CD8-positive, alpha-beta T cell (primary cell): ENCODE measurements at regions of chr5 and their contacts with region 1.

Region 1: DNA sequence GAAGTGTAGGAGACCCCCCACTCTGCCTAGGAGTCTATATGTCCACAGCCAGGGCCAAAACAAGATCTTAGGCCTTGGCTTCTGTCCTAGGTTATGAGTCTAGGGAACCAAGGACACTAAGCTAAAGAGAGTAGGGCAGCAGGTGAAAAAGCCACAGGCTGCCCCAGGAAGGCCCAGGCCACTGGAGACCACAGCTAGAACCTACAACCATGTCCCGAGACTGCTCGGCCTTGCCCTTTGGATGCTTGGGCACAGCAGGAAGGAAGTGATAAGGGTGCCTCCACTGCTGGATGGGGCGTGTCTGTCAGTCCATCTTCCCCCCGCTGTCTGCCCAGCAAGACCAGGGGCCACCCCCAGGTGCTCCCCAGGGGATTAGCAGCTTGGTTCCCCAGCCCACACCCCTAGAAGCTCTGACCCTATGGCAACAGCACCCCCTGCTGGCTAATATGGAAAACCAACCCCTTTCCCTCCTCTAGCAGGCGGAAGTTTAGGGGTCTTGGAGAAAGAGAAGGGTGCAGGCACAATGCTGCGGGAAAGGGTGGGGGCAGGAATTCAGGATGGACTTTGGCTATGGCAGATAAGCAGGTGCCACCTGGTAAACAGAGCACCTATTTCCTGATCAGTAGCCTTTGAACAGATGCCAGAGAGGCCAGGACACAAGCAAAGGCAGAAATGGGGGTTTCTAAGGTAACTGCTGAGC is 10.5 kb upstream of the IRF1 start:
- DNase-seq: peak; percentile 49 to 89 (median 79)
- ATAC-seq: peak; percentile 26
- H3K4me3 ChIP-seq: no peak overlapping the region
- H3K4me3 Mint-ChIP-seq: no peak overlapping the region
- H3K27ac ChIP-seq: peak overlapping the region in 1 of 2 experiments; percentile 86
- H3K27ac Mint-ChIP-seq: no peak overlapping the region
- H3K4me1 ChIP-seq: peaks cover 32% of the 10 kb centered on the region
- H3K4me1 Mint-ChIP-seq: peaks cover 36% of the 10 kb centered on the region
- H3K27me3 ChIP-seq: no peaks in the 10 kb centered on the region
- H3K27me3 Mint-ChIP-seq: peaks cover 3% of the 10 kb centered on the region
- CTCF ChIP-seq: peak; percentile 76

Region 2: DNA sequence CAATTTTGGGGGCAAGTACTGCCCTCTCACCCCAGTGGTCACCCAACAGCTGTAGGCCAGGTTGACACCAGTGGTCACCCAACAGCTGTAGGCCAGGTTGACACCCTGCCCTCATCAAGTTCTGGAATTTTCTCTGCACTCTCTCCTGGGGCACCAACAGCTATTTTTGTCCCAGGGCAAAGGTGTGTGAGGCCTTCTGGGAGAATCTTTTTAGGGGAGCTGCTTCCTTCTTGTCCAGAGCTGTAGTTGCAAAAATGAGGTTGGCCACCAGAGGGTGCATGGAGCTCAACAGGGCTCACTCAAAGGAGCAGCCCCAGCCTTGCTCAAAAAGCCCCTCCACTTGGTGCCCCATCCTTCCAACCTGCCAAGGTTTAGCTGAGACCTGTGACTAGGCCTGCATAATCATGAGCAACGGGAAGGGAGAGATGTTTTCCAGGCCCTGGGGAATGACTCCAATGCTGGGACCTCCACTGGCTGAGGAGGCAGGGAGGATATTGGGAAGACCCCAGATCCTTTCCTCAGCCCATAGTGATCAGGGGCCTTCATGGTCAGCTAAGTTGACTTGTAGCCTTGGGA is 262.8 kb before region 1 on chr5:
- CTCF ChIA-PET with region 1: interaction called, 13 read pairs
- POLR2A ChIA-PET with region 1: no interaction called
- intact Hi-C with region 1: loop called (anchors 1 kb)
- DNase-seq: peak; percentile 45 to 78 (median 70)
- ATAC-seq: peak; percentile 89
- H3K4me3 ChIP-seq: no peak overlapping the region
- H3K4me3 Mint-ChIP-seq: no peak overlapping the region
- H3K27ac ChIP-seq: no peak overlapping the region
- H3K27ac Mint-ChIP-seq: no peak overlapping the region
- H3K4me1 ChIP-seq: no peaks in the 10 kb centered on the region
- H3K4me1 Mint-ChIP-seq: no peaks in the 10 kb centered on the region
- H3K27me3 ChIP-seq: no peaks in the 10 kb centered on the region
- H3K27me3 Mint-ChIP-seq: no peaks in the 10 kb centered on the region
- CTCF ChIP-seq: peak; percentile 73

Region 3: DNA sequence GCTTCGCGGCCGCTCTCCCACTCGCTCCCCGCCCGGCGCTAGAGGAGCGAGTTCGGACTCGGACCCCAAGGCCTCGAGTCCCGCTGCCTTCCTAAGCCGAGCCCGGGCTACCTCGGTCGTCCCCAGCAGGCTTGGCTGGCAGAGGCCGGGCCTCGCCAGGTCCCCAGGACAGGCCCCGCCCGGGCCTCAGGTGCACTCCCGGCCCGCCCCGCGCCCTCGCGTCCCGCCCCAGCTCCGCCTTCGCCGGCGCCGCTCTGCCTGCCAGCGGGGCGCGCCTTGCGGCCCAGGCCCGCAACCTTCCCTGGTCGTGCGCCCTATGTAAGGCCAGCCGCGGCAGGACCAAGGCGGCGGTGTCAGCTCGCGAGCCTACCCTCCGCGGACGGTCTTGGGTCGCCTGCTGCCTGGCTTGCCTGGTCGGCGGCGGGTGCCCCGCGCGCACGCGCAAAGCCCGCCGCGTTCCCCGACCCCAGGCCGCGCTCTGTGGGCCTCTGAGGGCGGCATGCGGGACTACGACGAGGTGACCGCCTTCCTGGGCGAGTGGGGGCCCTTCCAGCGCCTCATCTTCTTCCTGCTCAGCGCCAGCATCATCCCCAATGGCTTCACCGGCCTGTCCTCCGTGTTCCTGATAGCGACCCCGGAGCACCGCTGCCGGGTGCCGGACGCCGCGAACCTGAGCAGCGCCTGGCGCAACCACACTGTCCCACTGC is 131.5 kb before region 1 on chr5 and contains the start of gene SLC22A5:
- CTCF ChIA-PET with region 1: interaction called, 20 read pairs
- POLR2A ChIA-PET with region 1: interaction called, 6 read pairs
- intact Hi-C with region 1: no loop called
- DNase-seq: peak; percentile 44 to 84 (median 68)
- ATAC-seq: peak; percentile 94
- H3K4me3 ChIP-seq: peak within 1 kb of the TSS; percentile 68 to 78
- H3K4me3 Mint-ChIP-seq: peak within 1 kb of the TSS; percentile 81
- H3K27ac ChIP-seq: peak within 1 kb of the TSS; percentile 68 to 77
- H3K27ac Mint-ChIP-seq: peak within 1 kb of the TSS; percentile 84
- H3K4me1 ChIP-seq: peaks cover 15% of the 10 kb centered on the region
- H3K4me1 Mint-ChIP-seq: peaks cover 31% of the 10 kb centered on the region
- H3K27me3 ChIP-seq: no peaks in the 10 kb centered on the region
- H3K27me3 Mint-ChIP-seq: no peaks in the 10 kb centered on the region
- CTCF ChIP-seq: no peak
- total RNA-seq, gene SLC22A5: 4.5 to 5.3 TPM

Region 4: DNA sequence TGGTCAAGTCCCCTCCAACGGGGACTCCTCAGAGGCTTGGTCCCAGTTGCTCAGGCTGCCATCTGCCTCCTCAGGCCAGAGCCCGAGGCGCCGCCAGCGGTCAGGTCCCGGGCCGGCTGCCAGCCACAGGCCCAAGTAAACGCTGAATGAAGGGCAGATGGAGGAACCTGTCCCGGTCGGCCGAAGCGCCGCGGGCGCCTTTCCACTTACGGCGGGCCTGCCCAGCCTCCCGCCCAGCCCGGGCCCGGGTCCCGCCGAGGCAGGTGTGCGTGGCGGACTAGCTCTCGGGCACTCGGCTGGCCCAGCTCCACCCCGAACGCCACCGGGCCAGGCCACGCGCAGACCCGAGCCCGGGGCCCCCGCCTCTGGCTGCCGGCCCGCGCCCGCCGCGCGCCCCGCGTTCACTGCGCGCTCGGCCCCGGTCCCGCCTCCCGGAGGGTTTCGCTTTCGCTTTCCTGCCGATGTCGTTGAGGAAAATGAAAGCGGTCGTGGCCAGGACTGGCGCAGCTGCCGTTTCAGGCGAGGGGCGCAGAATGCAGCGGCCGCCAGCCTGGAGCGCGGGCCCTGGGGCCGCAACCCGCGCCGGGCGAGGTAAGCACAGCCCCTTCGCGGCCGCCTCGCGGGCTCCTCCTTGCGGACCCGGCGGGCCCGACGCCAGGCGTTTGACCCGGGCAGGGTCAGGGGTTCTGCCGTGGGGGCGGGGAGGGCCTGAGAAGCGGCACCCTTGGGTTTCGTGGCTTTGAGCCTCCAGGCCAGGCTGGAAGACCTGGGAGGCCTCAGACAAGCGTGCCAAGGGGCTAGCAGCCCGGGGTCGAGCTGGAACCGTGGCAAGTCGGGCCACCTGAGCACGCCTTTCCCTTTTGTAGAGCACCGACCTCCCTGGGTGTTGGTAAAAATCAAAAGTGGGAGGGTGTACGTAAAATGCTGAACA is 90.4 kb before region 1 on chr5:
- CTCF ChIA-PET with region 1: interaction called, 36 read pairs
- POLR2A ChIA-PET with region 1: interaction called, 43 read pairs
- intact Hi-C with region 1: loop called in 1 of 2 experiments (anchors 2 kb)
- DNase-seq: peak; percentile 61 to 93 (median 80)
- ATAC-seq: peak; percentile 66
- H3K4me3 ChIP-seq: peak overlapping the region; percentile 73 to 94
- H3K4me3 Mint-ChIP-seq: peak overlapping the region; percentile 95
- H3K27ac ChIP-seq: peak overlapping the region; percentile 96 to 98
- H3K27ac Mint-ChIP-seq: peak overlapping the region; percentile 98
- H3K4me1 ChIP-seq: peaks cover 79% of the 10 kb centered on the region
- H3K4me1 Mint-ChIP-seq: peaks cover 80% of the 10 kb centered on the region
- H3K27me3 ChIP-seq: no peaks in the 10 kb centered on the region
- H3K27me3 Mint-ChIP-seq: no peaks in the 10 kb centered on the region
- CTCF ChIP-seq: peak; percentile 44

Region 5: GRCh38 chr5:132426525-132427138 is 74.4 kb before region 1 on chr5:
- CTCF ChIA-PET with region 1: interaction called, 18 read pairs
- POLR2A ChIA-PET with region 1: interaction called, 25 read pairs
- intact Hi-C with region 1: no loop called
- DNase-seq: peak in 8 of 9 experiments; percentile 52 to 85 (median 66)
- ATAC-seq: peak; percentile 13
- H3K4me3 ChIP-seq: peak overlapping the region; percentile 17 to 31
- H3K4me3 Mint-ChIP-seq: peak overlapping the region; percentile 71
- H3K27ac ChIP-seq: peak overlapping the region; percentile 77 to 98
- H3K27ac Mint-ChIP-seq: peak overlapping the region; percentile 97
- H3K4me1 ChIP-seq: peaks cover 99% of the 10 kb centered on the region
- H3K4me1 Mint-ChIP-seq: peaks cover 95% of the 10 kb centered on the region
- H3K27me3 ChIP-seq: no peaks in the 10 kb centered on the region
- H3K27me3 Mint-ChIP-seq: no peaks in the 10 kb centered on the region
- CTCF ChIP-seq: no peak

Region 6: DNA sequence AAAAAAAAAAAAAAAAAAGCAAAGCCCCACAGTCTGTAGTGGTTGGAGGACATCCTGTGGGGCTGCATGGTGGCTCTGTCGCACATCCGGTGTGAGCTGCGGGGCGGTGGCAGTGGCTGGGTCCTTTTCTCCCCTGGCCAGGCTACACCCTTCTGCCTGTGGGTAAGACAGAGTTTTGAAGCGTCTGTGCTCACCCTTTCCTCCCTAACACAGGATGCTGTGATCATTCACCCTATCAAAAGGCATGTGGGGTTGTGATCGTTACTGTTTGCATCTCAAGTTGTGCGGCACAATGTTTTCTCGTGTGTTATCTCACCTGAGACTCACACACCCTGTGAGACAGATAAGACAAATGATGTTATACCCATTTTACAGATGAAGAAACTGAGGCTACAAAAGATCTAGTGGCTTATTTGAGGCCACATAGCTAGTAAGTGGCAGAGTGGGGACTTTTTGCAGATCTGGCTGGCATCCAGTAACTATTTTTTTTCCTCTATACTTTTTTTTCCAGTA is 28.0 kb before region 1 on chr5:
- CTCF ChIA-PET with region 1: interaction called, 24 read pairs
- POLR2A ChIA-PET with region 1: interaction called, 21 read pairs
- intact Hi-C with region 1: no loop called
- DNase-seq: peak; percentile 70 to 97 (median 85)
- ATAC-seq: peak; percentile 73
- H3K4me3 ChIP-seq: no peak overlapping the region
- H3K4me3 Mint-ChIP-seq: peak overlapping the region; percentile 5
- H3K27ac ChIP-seq: peak overlapping the region; percentile 52 to 93
- H3K27ac Mint-ChIP-seq: peak overlapping the region; percentile 87
- H3K4me1 ChIP-seq: peaks cover 82% of the 10 kb centered on the region
- H3K4me1 Mint-ChIP-seq: peaks cover 92% of the 10 kb centered on the region
- H3K27me3 ChIP-seq: no peaks in the 10 kb centered on the region
- H3K27me3 Mint-ChIP-seq: no peaks in the 10 kb centered on the region
- CTCF ChIP-seq: no peak